A673 (cell line): ENCODE measurements at regions of chr2 and their contacts with region 1.

Region 1: GRCh38 chr2:132632000-132632649 is 37.9 kb downstream of the LYPD1 start:
- DNase-seq: no peak
- H3K4me3 ChIP-seq: no peak overlapping the region
- H3K27ac ChIP-seq: no peak overlapping the region
- H3K4me1 ChIP-seq: peaks cover 3% of the 10 kb centered on the region
- H3K27me3 ChIP-seq: no peaks in the 10 kb centered on the region
- CTCF ChIP-seq: no peak

Region 2: DNA sequence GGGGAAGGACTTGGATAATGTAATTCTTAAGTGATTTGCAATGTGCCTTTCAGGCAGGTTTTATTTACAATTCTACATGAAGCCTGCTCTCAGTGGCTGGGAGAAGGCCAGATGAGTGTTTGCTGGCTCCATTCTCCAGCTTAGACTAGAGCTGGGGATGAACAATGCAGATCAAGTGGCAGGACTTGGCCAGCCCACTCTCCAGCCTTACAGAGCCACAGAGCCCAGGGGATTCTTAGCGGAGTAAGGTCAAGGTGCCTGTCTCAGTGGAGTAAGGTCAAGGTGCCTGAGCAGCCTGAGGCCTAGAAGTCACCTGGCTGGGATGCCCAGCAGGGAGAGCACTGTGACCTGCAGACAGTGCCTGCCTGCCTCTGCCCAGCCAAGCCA is 49.8 kb before region 1 on chr2:
- CTCF ChIA-PET with region 1: no interaction called
- POLR2A ChIA-PET with region 1: no interaction called
- intact Hi-C with region 1: no loop called
- DNase-seq: no peak
- H3K4me3 ChIP-seq: no peak overlapping the region
- H3K27ac ChIP-seq: no peak overlapping the region
- H3K4me1 ChIP-seq: no peaks in the 10 kb centered on the region
- H3K27me3 ChIP-seq: peaks cover 10% of the 10 kb centered on the region
- CTCF ChIP-seq: no peak

Region 3: GRCh38 chr2:132615329-132616085 is 16.6 kb before region 1 on chr2:
- CTCF ChIA-PET with region 1: no interaction called
- POLR2A ChIA-PET with region 1: no interaction called
- intact Hi-C with region 1: loop called (anchors 2 kb)
- DNase-seq: no peak
- H3K4me3 ChIP-seq: no peak overlapping the region
- H3K27ac ChIP-seq: no peak overlapping the region
- H3K4me1 ChIP-seq: no peaks in the 10 kb centered on the region
- H3K27me3 ChIP-seq: peaks cover 4% of the 10 kb centered on the region
- CTCF ChIP-seq: no peak

Region 4: DNA sequence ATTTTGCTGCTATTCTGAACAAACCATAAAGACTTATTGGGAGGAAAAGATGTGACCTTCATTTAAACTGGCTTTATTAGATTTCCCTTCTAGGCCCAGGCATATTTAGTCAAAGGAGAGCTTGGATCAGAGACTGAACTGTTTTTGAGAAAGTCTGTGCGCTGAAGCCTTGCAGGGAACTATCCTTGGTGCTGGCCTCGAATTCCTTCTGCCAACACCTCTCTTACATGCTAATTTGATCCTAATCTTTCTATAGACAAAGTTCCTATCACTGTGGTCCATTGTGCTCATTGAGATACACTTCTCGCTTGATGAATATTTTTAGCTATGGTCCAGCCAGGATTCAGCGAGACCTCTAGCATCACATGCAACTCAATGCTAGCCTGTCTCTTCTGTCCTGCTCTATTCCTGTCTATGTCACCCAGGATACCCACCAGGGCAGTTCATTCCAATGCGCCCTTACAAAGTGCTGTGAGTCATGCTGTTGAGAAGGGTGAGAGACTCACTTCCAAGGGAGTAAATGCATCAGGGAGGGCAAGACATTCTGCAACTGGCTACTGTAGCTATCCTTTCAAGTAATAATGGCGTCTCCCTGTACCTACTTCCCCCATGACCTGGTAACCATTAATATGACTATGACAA is 394.5 kb after region 1 on chr2:
- CTCF ChIA-PET with region 1: no interaction called
- POLR2A ChIA-PET with region 1: no interaction called
- intact Hi-C with region 1: no loop called
- DNase-seq: peak; percentile 22
- H3K4me3 ChIP-seq: no peak overlapping the region
- H3K27ac ChIP-seq: no peak overlapping the region
- H3K4me1 ChIP-seq: peaks cover 3% of the 10 kb centered on the region
- H3K27me3 ChIP-seq: no peaks in the 10 kb centered on the region
- CTCF ChIP-seq: no peak

Region 5: DNA sequence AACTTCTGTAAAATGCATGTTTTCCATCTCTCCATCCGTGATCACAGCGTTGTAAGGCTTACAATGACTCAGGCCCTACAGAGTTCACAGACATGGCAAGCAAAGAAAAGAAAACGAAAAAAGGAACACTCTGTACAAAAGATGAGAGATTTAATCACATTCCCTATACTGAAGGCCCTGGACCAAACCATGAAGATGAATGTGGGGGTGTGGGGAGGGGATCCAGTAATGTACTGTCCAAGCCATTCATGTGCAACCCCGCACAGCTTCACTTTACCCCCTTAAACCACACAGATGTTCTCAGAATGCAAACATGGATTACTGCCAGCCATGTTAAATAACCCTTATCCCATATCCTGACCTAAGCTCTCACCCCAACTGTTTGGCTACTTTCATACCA is 545.1 kb after region 1 on chr2:
- CTCF ChIA-PET with region 1: interaction called, 13 read pairs
- POLR2A ChIA-PET with region 1: no interaction called
- intact Hi-C with region 1: no loop called
- DNase-seq: no peak
- H3K4me3 ChIP-seq: no peak overlapping the region
- H3K27ac ChIP-seq: no peak overlapping the region
- H3K4me1 ChIP-seq: peaks cover 19% of the 10 kb centered on the region
- H3K27me3 ChIP-seq: no peaks in the 10 kb centered on the region
- CTCF ChIP-seq: no peak